Sciatic nerve (tissue), 2 donors: ENCODE measurements at regions of chr10 and their contacts with region 1.

Region 1: DNA sequence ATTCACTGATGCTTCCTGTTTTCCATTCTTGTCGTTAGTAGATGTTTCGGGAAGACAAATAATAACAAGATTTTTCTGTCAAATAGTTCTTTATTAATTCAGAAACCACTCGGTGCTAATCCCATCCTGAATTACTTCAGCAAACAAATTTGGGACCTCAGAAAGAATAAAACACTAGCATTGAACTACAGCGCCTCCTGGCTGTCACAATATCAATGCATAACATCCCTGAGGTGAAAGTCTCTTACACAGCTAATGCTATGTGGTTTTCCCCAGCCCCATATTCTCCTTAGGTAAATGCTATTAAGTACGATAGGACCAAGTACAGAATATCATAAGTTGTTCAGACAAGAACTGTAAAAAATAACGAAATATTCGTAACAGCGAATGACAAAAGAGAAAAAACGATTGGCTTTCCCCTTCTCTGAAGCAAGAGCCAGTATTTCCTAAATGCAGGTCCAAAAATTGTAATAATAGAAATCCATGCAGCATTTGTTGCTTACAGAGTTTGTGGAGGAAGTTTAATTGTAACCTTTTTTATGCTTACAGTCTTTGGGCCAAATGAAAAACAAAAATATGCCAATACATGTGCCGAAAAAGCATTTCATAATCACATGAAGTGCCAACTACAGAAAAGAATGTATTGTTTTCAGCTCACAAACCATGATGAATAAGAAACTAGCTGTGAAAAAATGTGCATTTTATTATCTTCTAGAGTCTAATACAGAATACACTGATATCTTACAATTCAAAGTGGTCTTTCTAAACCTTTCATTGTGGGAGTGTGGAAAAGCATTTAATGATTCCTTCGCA is 47.3 kb downstream of the MYPN start:
- DNase-seq: peak; percentile 77
- ATAC-seq: peak; percentile 73

Region 2: GRCh38 chr10:67861750-67862460 is 294.7 kb before region 1 on chr10:
- intact Hi-C with region 1: loop called (anchors 10 kb)
- DNase-seq: no peak
- ATAC-seq: no peak

Region 3: DNA sequence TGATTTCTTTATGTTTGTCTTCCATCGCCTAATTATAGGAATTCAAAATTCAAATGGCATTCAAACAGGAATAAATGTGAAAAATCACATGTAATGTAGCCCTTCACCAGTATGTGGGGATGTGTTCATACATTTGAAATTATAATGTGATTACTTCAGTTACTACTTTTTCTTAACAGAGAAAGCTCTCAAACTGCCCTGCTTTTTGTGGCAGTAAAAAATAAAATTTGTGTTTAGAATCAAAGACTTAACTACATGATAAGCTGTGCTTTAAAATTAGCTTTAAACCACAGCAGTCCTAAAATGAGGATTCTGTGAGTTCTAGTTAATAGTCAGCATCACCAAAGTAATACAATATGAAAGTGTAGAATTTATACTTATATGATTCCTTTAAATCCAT is 73.7 kb before region 1 on chr10:
- intact Hi-C with region 1: loop called (anchors 10 kb)
- DNase-seq: no peak
- ATAC-seq: no peak